PC-9 (cell line): ENCODE measurements at regions of chr15 and their contacts with region 1.

Region 1: DNA sequence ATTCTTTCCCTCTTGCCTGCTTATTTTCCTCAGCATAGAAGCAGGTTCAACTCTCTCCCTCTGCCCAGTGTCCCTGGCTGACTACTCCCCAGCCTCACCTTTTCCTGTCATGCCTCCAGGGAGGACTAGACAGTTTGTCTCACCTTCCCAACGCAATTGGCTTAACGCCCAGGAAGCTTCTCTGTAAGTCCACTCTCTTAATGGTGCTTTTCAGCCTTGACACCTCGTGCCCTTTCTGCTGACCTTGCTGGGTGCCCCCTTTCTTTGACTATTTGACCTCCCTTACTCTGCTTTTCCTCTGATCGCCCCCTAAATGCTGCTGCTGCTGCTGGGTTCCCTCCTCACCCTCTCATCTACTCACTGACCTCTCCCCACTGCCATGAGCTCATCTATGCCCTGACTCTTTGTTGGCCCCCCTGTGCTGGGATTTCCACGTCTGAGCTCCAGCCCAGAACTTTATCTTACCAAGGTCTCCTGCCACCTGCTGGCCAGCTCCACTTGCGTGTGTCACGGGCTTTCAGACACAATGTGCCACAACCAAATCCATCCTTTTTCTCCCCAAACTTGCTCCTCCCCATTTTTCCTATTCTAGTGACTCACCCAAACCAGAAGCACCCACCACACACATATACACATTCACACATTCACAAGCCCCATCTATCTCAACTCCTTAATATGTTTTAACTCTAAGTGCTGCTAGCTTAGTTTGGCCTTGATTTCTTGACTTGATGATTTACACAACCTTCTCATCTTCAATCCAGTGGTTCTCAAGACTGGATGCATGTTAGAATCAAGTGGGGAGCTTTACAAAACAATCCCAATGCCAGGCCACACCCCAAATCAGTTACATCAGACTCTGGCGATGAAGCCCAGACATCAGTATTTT is 16.6 kb downstream of the EPB42 start:
- DNase-seq: no peak
- H3K4me3 ChIP-seq: no peak overlapping the region
- H3K27ac ChIP-seq: no peak overlapping the region
- H3K4me1 ChIP-seq: no peaks in the 10 kb centered on the region
- H3K27me3 ChIP-seq: no peaks in the 10 kb centered on the region
- CTCF ChIP-seq: peak; percentile 54

Region 2: DNA sequence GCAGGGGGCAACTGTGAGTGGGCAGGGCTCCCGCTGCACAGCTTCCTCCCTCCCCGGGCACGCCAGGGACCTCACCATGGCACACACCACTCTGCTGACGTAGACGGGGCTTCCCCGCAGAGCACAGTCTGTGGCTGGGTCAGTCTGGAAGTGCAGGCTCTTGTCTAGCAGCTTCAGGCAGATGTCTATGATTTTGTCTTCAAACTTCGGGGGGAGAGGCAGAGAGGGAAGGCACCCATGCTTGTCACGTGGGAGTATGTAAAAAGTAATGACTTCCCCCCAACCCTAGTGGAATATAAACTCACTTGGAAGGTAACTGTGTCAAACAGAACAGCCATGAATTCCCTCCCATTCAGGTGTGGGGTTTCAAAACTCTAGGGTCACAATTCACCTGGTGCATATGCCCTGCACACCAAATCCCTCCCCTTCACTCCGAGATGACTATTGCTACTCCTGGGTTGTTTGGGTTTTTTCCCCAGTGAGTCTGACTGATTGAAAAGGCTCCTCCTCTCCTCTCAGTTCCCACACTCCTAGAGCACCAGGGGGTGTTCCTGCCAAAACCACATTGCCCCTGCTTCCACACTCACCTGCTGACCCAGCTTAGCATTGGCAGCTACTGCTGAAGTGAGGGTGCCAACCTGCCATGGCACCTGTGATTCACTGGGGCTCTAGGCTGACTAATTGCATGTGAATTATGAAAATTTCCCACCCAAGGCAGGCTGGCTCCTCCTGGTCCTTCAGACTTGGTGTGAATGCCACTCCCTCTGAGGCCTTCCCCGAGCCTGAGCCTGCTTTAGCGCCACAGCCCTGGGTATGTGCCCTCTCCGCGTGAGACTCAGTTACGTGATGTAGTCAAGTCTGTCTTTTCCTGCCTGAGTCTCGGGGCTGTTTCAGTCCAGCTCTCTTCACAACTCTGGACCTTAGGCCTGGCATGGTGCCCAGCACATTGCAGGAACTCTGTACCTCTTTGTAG is 49.5 kb after region 1 on chr15:
- CTCF ChIA-PET with region 1: no interaction called
- POLR2A ChIA-PET with region 1: no interaction called
- intact Hi-C with region 1: no loop called
- DNase-seq: peak; percentile 82 to 97
- H3K4me3 ChIP-seq: no peak overlapping the region; the same call in 1 of the 2 replicates
- H3K27ac ChIP-seq: peak overlapping the region; percentile 100
- H3K4me1 ChIP-seq: peaks cover 59% of the 10 kb centered on the region
- H3K27me3 ChIP-seq: no peaks in the 10 kb centered on the region
- CTCF ChIP-seq: no peak

Region 3: DNA sequence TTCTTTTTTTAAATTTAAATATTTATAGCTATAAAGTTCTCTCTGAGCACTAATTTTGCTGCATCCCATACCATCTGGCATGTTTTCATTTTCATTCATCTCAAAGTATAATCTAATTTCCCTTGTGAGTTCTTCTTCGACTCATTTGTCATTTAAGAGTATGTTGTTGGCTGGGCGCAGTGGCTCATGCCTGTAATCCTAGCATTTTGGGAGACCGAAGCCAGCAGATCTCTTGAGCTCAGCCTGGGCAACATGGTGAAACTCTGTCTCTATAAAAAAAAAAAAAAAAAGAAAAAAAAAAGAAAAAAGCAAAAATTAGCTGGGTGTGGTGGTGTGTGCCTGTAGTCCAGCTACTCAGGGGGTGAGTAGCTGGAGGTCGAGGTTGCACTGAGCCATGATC is 348.0 kb after region 1 on chr15:
- CTCF ChIA-PET with region 1: interaction called, 10 read pairs
- POLR2A ChIA-PET with region 1: no interaction called
- intact Hi-C with region 1: no loop called
- DNase-seq: no peak
- H3K4me3 ChIP-seq: no peak overlapping the region
- H3K27ac ChIP-seq: no peak overlapping the region
- H3K4me1 ChIP-seq: no peaks in the 10 kb centered on the region
- H3K27me3 ChIP-seq: no peaks in the 10 kb centered on the region
- CTCF ChIP-seq: no peak